Panc1 (cell line): ENCODE measurements at regions of chr3 and their contacts with region 1.

Region 1: DNA sequence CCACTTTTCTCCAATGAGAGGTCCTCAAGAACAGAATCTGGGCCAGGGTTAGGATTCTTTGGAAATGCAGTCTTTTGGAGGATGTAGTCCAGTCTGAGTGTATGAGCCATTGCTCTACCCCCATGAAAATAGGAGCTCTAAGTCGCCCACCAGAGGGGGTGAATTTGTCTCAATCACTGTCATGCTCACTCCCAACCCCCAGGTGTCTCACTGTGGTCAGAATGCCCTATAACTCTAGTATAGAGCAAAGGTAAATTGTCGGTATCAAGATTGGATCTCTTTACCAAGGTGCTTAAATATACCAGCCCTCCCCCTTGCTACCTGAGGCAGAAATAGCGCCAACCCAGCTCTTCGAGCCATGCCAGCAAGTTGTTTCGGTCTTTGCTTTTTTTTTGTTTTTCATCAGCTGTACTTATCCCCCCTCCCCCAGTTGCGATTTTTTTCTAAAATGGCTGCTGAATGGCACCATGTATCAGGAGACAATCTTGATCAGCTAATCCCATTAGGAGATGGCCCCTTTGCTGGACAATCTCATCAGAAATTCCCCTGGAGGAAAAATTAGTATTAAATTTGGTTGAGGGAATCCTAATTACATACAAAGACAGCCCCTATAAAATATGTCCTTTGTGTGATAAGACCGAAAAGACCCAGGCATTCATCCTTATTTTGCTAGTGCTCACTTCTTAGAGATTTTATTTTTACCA is 130.7 kb downstream of the EBLN2 start:
- DNase-seq: no peak
- ATAC-seq: no peak
- H3K4me3 ChIP-seq: no peak overlapping the region
- H3K27ac ChIP-seq: no peak overlapping the region
- H3K4me1 ChIP-seq: no peaks in the 10 kb centered on the region
- H3K27me3 ChIP-seq: no peaks in the 10 kb centered on the region
- CTCF ChIP-seq: peak; percentile 11; the same call in 1 of the 2 replicates

Region 2: DNA sequence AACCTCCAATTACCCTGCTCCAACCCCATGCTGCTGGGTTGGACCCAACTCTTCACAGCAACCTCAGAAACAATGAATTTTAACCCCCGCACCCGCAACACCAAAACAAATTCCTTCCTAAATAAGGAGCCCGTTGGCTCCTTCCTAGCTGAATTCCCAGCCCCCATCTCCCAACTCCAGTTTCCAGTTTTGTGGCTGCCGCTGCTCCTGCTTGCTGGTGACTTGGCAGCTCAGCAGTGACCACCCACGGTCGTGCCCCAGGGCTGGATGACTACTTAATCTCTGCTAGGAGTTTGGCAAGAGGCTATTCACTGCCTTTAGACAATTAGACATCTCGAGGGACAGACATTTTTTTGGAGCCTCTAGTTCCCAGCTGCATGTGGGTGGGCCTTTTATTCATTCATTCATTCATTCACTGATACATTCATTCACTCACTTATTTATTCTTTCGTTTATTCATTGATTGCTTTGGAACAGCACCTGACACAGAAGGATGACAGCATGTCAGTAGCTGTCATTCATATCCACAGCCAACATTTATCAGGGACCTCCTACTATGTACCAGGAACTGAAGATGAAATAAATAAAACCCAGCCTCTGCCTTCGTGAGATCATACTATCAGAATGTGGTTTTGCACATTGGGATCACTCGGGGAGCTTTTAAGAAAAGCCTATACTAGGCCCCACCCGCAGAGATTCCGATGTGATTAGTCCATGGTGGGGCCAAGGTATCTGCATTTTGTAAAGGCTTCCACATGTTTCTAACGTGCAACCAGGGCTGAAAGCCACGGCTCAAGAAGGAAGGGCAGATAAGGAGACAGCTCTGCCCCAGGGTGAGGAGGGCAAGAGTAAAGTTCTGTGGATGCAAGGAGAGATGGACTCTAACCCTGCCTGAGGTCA is 600.4 kb before region 1 on chr3:
- CTCF ChIA-PET with region 1: no interaction called
- POLR2A ChIA-PET with region 1: no interaction called
- in situ Hi-C with region 1: no loop called
- intact Hi-C with region 1: no loop called
- DNase-seq: no peak
- ATAC-seq: no peak
- H3K4me3 ChIP-seq: no peak overlapping the region
- H3K27ac ChIP-seq: no peak overlapping the region
- H3K4me1 ChIP-seq: no peaks in the 10 kb centered on the region
- H3K27me3 ChIP-seq: no peaks in the 10 kb centered on the region
- CTCF ChIP-seq: no peak

Region 3: DNA sequence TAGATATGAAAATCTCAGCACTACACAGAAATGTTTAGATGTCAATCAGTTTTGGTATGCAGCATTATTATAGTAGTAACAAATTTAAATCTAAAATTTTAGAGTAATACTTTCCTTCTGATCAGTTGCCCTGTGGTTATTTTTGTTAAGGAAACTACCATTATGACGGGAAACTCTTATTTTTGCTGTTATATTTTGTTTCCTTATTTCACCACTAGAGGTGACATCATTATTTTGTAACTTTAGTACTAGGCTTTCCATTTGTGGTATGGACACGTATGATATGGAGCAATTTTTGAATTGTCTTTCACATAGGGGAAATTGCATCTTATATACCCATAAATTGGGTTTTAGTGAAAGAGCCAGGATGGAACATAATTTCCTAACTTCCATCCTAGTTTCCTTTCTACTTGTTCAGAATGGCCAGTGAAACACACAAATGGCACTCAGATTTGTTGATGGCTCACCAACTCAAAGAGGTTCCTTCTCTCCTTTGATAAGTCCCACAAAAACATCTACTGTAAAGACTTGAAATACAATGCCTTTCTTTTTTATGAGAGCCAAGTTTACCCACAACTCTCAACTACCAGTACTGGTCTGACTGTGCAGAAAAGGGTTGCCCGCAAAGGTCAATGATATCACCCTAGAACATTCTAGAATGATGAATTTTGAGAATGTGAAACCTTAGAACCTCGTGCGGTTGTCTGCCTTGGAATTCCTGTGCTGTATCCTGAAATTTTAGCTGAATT is 215.0 kb before region 1 on chr3:
- CTCF ChIA-PET with region 1: no interaction called
- POLR2A ChIA-PET with region 1: no interaction called
- in situ Hi-C with region 1: no loop called
- intact Hi-C with region 1: no loop called
- DNase-seq: no peak
- ATAC-seq: no peak
- H3K4me3 ChIP-seq: no peak overlapping the region
- H3K27ac ChIP-seq: no peak overlapping the region
- H3K4me1 ChIP-seq: no peaks in the 10 kb centered on the region
- H3K27me3 ChIP-seq: no peaks in the 10 kb centered on the region
- CTCF ChIP-seq: no peak

Region 4: GRCh38 chr3:73365756-73366397 is 173.7 kb after region 1 on chr3:
- CTCF ChIA-PET with region 1: interaction called, 11 read pairs
- POLR2A ChIA-PET with region 1: no interaction called
- in situ Hi-C with region 1: no loop called
- intact Hi-C with region 1: no loop called
- DNase-seq: no peak
- ATAC-seq: no peak
- H3K4me3 ChIP-seq: no peak overlapping the region
- H3K27ac ChIP-seq: no peak overlapping the region
- H3K4me1 ChIP-seq: no peaks in the 10 kb centered on the region
- H3K27me3 ChIP-seq: no peaks in the 10 kb centered on the region
- CTCF ChIP-seq: no peak

Region 5: GRCh38 chr3:73687106-73688004 is 495.2 kb after region 1 on chr3:
- CTCF ChIA-PET with region 1: interaction called, 12 read pairs
- POLR2A ChIA-PET with region 1: no interaction called
- in situ Hi-C with region 1: no loop called
- intact Hi-C with region 1: no loop called
- DNase-seq: no peak
- ATAC-seq: no peak
- H3K4me3 ChIP-seq: no peak overlapping the region
- H3K27ac ChIP-seq: no peak overlapping the region
- H3K4me1 ChIP-seq: no peaks in the 10 kb centered on the region
- H3K27me3 ChIP-seq: no peaks in the 10 kb centered on the region
- CTCF ChIP-seq: no peak